ENCODE measurements at regions of chr16 and their contacts with region 1.

Region 1: DNA sequence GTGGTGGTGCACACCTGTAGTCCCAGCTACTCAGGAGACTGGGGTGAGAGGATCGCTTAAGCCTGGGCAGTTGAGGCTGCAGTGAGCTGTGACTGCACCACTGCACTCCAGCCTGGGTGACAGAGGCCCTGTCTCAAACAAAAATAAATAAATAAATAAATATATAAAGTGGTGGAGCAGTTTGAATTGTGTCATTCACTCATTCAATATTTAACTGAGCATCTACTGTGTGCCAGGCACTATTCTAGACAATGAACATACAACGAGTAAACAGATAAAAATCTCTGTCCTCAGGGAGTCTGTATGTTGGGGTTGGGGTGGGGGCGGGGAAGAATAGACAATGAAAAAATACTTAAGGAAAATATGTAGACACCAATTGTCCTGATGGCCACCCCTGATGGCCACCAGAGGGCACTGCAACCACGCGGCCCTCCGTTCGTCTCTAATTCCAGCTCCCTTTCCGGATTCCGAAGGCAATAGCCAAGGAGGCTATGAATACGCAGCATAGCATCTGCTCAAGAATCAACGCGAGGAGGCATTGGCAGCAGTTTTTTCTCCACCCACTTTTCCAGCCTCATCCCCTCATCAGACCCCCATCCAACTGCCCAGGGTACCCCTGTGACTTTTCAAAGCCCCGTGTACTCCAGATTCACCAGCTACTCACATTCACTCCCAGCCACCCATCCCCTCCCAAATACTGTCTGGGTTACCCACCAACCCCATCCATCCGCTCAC is 21.4 kb downstream of the QPRT start:
- DNase-seq: peak; percentile 85
- ATAC-seq: peak; percentile 31
- H3K4me3 Mint-ChIP-seq: no peak overlapping the region
- H3K27ac Mint-ChIP-seq: peak overlapping the region; percentile 23
- H3K4me1 Mint-ChIP-seq: peaks cover 29% of the 10 kb centered on the region
- H3K27me3 Mint-ChIP-seq: no peaks in the 10 kb centered on the region
- CTCF ChIP-seq: peak; percentile 93

Region 2: DNA sequence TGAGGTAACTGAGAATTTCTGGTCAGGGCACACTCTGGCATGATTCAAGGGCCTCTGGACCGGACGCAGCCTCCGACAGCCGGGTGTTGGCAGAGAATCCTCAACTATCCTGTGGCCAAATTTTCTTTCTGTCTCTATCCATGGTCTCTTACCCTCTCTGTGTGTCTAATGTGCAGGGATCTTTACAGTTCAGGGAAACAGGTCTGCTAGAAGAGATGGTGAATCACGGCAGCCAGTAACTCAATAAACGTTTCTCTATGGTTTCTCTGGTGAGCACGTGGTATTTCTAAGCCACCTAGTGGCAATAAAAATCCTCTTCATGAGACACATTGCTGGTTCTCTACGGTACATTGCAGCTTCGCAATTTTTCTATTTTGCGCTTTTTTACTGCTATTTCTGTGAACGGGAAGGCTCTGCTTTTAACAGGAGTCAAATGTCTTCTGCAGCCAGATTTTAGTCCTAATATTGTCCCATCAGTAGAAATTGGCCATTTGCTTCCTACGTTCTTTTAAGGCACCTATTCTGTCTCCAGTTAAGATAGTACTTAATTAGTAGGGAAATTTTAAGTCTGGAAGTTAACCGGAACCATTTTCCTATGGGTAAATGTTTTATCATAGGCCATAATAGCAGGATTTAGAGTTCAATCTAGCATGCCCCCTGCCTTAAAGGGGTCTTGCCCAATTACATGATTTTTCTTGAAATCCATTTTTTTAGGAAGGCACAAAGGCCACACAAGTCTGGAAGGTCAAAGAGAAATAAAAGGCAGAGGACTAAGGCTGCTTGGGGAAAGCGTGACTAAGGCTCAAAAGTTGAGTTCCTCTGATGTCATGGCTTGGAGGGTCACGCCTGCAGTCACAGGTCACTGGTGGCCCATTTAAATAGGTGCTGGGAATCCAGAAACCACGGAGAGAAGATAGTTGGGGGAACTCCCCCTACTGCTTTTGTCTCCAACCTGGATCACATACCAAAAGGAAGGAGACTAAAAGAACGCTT is 10.1 kb after region 1 on chr16:
- CTCF ChIA-PET with region 1: interaction called, 19 read pairs
- POLR2A ChIA-PET with region 1: interaction called, 4 read pairs
- intact Hi-C with region 1: no loop called
- DNase-seq: peak; percentile 53
- ATAC-seq: peak; percentile 93
- H3K4me3 Mint-ChIP-seq: no peak overlapping the region
- H3K27ac Mint-ChIP-seq: no peak overlapping the region
- H3K4me1 Mint-ChIP-seq: peaks cover 14% of the 10 kb centered on the region
- H3K27me3 Mint-ChIP-seq: no peaks in the 10 kb centered on the region
- CTCF ChIP-seq: peak; percentile 81

Region 3: DNA sequence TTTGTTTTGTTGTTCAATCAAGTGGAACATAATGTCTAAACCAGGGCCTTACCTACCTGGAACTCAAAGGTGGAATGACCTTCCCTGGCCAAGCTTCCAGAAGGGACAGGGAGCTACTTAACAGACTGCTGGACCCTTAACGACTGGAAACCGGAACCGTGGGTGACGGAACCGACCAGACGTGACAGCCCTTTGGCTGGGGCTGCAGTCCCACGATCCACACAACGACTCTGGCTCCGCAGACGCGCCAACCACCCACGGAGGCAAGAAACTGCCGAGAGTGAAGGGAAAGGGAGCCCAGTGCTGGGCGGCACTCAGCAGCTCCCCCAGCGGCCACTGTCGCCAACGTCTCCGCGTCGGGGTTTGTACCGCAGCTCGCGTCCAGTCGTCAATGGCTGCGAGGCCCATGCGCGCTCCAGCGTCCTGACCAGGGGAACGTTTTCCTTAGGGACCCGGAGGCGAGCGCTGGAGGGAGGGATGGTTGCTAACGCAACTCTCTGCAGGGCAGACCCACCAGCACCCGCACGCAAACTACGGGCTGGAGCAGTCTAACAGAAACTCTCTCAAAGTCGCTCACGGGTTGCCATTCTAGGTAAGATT is 84.6 kb after region 1 on chr16:
- CTCF ChIA-PET with region 1: interaction called, 43 read pairs
- POLR2A ChIA-PET with region 1: interaction called, 16 read pairs
- intact Hi-C with region 1: loop called (anchors 10 kb)
- DNase-seq: peak; percentile 84
- ATAC-seq: peak; percentile 91
- H3K4me3 Mint-ChIP-seq: peak overlapping the region; percentile 58
- H3K27ac Mint-ChIP-seq: peak overlapping the region; percentile 66
- H3K4me1 Mint-ChIP-seq: peaks cover 32% of the 10 kb centered on the region
- H3K27me3 Mint-ChIP-seq: no peaks in the 10 kb centered on the region
- CTCF ChIP-seq: peak; percentile 91

Region 4: GRCh38 chr16:29805378-29806098 is 105.1 kb after region 1 on chr16:
- CTCF ChIA-PET with region 1: interaction called, 25 read pairs
- POLR2A ChIA-PET with region 1: interaction called, 23 read pairs
- intact Hi-C with region 1: loop called (anchors 10 kb)
- DNase-seq: peak; percentile 99
- ATAC-seq: peak; percentile 74
- H3K4me3 Mint-ChIP-seq: peak overlapping the region; percentile 90
- H3K27ac Mint-ChIP-seq: peak overlapping the region; percentile 96
- H3K4me1 Mint-ChIP-seq: peaks cover 27% of the 10 kb centered on the region
- H3K27me3 Mint-ChIP-seq: no peaks in the 10 kb centered on the region
- CTCF ChIP-seq: no peak

Region 5: DNA sequence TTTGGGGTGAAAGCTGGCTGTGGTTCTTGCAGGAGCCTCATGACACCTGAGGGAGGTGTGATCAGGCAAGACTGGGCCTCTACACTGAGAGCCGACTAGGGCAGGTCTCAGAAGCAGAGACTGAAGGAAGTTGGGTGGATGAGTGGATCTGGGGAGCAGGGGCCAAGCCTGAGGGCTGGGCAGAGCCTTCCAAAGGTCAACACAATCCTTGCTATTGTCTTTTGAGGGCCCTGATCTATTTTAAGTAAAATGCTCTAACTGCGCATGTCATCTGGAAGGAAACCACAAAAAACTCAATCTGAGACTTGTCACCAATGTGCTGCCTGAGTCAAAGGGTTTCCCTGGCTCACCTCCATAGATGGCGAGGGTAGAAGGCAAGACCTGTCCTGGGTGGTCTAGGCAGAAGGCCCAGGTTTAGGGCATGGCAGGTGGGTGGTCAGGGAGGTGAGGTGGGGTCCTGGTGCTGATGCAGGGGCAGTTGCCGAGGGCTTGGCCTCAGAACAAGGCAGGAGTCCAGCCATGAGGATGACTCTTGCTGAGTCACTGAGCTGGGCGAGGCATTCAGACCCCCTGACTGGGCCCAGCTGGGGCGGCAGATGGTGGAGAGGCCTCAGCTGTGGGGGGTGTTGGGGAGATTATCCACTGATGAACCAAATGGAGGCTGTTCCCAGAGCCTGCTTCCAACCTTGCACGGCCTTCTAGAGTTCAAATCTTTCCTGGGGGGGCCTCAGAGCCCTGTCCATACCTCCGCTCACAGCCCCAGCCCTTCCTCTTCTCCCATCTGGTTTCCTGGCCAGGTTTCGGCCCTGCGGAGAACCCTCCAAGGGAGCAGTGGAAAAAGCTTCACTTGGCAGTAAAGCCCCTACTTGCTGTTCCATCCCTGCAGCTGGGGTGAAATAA is 125.0 kb after region 1 on chr16:
- CTCF ChIA-PET with region 1: interaction called, 15 read pairs
- POLR2A ChIA-PET with region 1: interaction called, 5 read pairs
- intact Hi-C with region 1: no loop called
- DNase-seq: peak; percentile 76
- ATAC-seq: peak; percentile 60
- H3K4me3 Mint-ChIP-seq: peak overlapping the region; percentile 22
- H3K27ac Mint-ChIP-seq: peak overlapping the region; percentile 87
- H3K4me1 Mint-ChIP-seq: peaks cover 75% of the 10 kb centered on the region
- H3K27me3 Mint-ChIP-seq: no peaks in the 10 kb centered on the region
- CTCF ChIP-seq: no peak

Region 6: GRCh38 chr16:30005341-30006094 is 305.1 kb after region 1 on chr16:
- CTCF ChIA-PET with region 1: interaction called, 14 read pairs
- POLR2A ChIA-PET with region 1: no interaction called
- intact Hi-C with region 1: no loop called
- DNase-seq: peak; percentile 42
- ATAC-seq: peak; percentile 74
- H3K4me3 Mint-ChIP-seq: no peak overlapping the region
- H3K27ac Mint-ChIP-seq: no peak overlapping the region
- H3K4me1 Mint-ChIP-seq: peaks cover 7% of the 10 kb centered on the region
- H3K27me3 Mint-ChIP-seq: peaks cover 12% of the 10 kb centered on the region
- CTCF ChIP-seq: peak; percentile 85